A549 (cell line): ENCODE measurements at regions of chr15 and their contacts with region 1.

Region 1: GRCh38 chr15:70806992-70807712 is 43.8 kb upstream of the UACA start:
- DNase-seq: no peak
- ATAC-seq: no peak
- H3K4me3 ChIP-seq: no peak overlapping the region
- H3K27ac ChIP-seq: peak overlapping the region in 1 of 2 experiments; percentile 41; a peak in 3 of 6 replicates
- H3K4me1 ChIP-seq: peaks cover 22% of the 10 kb centered on the region
- CTCF ChIP-seq: no peak
- EP300 ChIP-seq: no peak
- POLR2A ChIP-seq: no peak
- RAD21 ChIP-seq: no peak

Region 2: GRCh38 chr15:70670680-70671079 is 136.5 kb before region 1 on chr15:
- CTCF ChIA-PET with region 1: interaction called, 44 read pairs
- POLR2A ChIA-PET with region 1: no interaction called
- DNase-seq: no peak
- ATAC-seq: no peak
- H3K4me3 ChIP-seq: no peak overlapping the region
- H3K27ac ChIP-seq: no peak overlapping the region
- H3K4me1 ChIP-seq: peaks cover 6% of the 10 kb centered on the region
- CTCF ChIP-seq: peak; percentile 64
- EP300 ChIP-seq: no peak
- POLR2A ChIP-seq: no peak
- RAD21 ChIP-seq: peak; percentile 65 to 67

Region 3: GRCh38 chr15:70708839-70709238 is 98.3 kb before region 1 on chr15:
- CTCF ChIA-PET with region 1: interaction called, 43 read pairs
- POLR2A ChIA-PET with region 1: no interaction called
- DNase-seq: no peak
- ATAC-seq: no peak
- H3K4me3 ChIP-seq: no peak overlapping the region
- H3K27ac ChIP-seq: no peak overlapping the region
- H3K4me1 ChIP-seq: peaks cover 16% of the 10 kb centered on the region
- CTCF ChIP-seq: no peak
- EP300 ChIP-seq: no peak
- POLR2A ChIP-seq: no peak
- RAD21 ChIP-seq: no peak

Region 4: GRCh38 chr15:70748281-70748747 is 58.8 kb before region 1 on chr15:
- CTCF ChIA-PET with region 1: interaction called, 42 read pairs
- POLR2A ChIA-PET with region 1: interaction called, 8 read pairs
- DNase-seq: no peak
- ATAC-seq: peak; percentile 34 to 56; a peak in 4 of 6 replicates
- H3K4me3 ChIP-seq: no peak overlapping the region
- H3K27ac ChIP-seq: peak overlapping the region in 1 of 2 experiments; percentile 30; a peak in 1 of 6 replicates
- H3K4me1 ChIP-seq: peaks cover 34% of the 10 kb centered on the region
- CTCF ChIP-seq: no peak
- EP300 ChIP-seq: no peak
- POLR2A ChIP-seq: no peak
- RAD21 ChIP-seq: no peak

Region 5: DNA sequence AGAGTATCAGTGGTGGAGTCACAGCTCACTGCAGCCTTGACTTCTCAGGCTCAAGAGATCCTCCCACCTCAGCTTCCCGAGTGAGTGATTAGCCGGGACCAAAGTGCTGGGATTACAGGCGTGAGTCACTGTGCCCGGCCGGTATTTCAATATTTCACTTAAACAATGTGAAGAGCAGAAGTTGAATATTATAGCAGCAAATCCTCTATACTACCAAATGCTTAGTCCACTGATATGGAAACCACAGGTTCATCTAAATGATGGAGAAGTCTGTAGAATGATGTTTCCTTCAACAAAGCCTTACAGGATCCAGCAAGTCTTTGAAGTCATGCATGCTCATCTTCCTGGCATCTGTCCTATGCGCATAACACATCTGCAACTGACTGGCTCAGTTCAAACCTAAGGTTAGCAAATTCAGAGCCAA is 23.5 kb before region 1 on chr15:
- CTCF ChIA-PET with region 1: interaction called, 274 read pairs
- POLR2A ChIA-PET with region 1: no interaction called
- DNase-seq: peak in 1 of 2 experiments; percentile 74
- ATAC-seq: peak; percentile 57 to 71; a peak in 4 of 6 replicates
- H3K4me3 ChIP-seq: no peak overlapping the region
- H3K27ac ChIP-seq: peak overlapping the region; percentile 70 to 82
- H3K4me1 ChIP-seq: peaks cover 75% of the 10 kb centered on the region
- CTCF ChIP-seq: no peak
- EP300 ChIP-seq: no peak
- POLR2A ChIP-seq: no peak
- RAD21 ChIP-seq: 0 out of 5 replicates have a peak, but pooled peaks of 1 of the 2 experiments have one; percentile 5

Region 6: DNA sequence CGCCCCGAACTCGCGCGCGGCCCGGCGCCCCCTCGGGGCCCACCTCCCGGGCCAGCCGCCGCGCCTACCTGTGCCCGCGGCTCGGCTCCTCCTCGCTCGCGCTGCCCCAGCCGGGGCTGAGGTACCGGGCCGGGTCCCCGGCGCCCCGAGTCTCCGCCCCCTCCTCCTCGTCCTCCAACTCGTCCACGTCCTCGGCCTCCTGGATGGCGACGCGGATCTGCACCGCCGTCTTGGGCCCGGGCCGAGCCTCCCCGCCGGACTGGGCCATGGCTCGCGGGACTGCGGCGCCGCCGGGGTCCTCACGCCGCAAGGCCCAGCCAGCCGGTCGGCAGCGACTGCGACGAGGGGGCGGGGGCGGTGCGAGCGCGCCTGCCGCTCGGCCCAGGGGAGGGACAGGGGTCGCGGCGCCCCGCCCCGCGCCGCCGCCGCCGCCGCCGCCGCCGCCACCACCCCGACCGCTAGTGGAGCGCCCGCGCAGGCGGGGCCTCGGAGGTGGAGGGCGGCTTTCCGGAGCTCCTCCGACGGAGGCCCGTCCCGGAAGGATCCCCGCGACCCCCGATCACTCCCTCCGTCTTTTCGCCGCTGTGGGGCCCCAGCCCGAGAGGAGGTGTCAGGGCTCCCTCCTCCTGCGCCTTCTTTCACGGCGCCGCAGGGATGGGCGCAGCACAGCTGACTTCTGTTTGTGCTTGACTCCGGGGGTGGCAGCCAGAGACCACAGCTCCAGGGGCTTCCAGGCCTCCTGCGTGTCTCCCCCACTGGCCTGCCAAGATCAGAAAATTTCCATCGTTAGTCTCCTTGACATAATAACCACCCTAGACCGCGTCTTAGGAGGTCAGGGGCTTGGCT is 46.9 kb after region 1 on chr15 and contains the start of gene LARP6:
- CTCF ChIA-PET with region 1: interaction called, 37 read pairs
- POLR2A ChIA-PET with region 1: no interaction called
- DNase-seq: peak; percentile 52 to 59
- ATAC-seq: peak; percentile 75 to 81
- H3K4me3 ChIP-seq: peak within 1 kb of the TSS; percentile 74
- H3K27ac ChIP-seq: peak within 1 kb of the TSS; percentile 89 to 93
- H3K4me1 ChIP-seq: peaks cover 41% of the 10 kb centered on the region
- CTCF ChIP-seq: no peak
- EP300 ChIP-seq: no peak
- POLR2A ChIP-seq: peak; percentile 71
- RAD21 ChIP-seq: no peak
- polyA plus RNA-seq, gene LARP6: 120 and 158 TPM in 2 replicates

Region 7: GRCh38 chr15:70955151-70955550 is 148.0 kb after region 1 on chr15:
- CTCF ChIA-PET with region 1: no interaction called
- POLR2A ChIA-PET with region 1: no interaction called
- DNase-seq: no peak
- ATAC-seq: no peak
- H3K4me3 ChIP-seq: no peak overlapping the region
- H3K27ac ChIP-seq: no peak overlapping the region
- H3K4me1 ChIP-seq: no peaks in the 10 kb centered on the region
- CTCF ChIP-seq: no peak
- EP300 ChIP-seq: no peak
- POLR2A ChIP-seq: no peak
- RAD21 ChIP-seq: no peak